Panc1 (cell line): ENCODE measurements at regions of chr11 and their contacts with region 1.

Region 1: DNA sequence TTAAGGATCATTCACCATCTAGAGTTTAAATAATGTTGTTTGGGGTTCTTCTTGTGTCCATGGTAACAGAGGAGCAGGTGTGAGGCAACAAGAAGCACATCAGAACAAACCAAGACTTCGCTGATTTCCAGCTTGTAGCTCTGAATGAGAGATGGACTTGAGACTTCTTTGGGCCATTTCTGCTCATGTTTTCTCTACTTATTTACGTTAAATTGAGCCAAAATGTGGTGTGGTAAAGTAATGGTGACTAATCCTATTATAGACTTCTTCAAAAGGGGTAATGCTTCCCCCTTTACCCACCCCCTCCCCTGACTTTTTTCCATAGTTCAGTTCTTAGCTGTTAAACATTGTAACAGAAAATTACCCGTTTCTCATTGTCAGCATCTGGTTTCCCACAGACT is 65.2 kb downstream of the CSTPP1 start:
- DNase-seq: no peak
- ATAC-seq: no peak
- H3K4me3 ChIP-seq: no peak overlapping the region
- H3K27ac ChIP-seq: no peak overlapping the region
- H3K4me1 ChIP-seq: no peaks in the 10 kb centered on the region
- H3K27me3 ChIP-seq: no peaks in the 10 kb centered on the region
- CTCF ChIP-seq: no peak

Region 2: GRCh38 chr11:47051217-47051616 is 49.4 kb after region 1 on chr11:
- CTCF ChIA-PET with region 1: no interaction called
- POLR2A ChIA-PET with region 1: interaction called, 11 read pairs
- in situ Hi-C with region 1: no loop called
- intact Hi-C with region 1: no loop called
- DNase-seq: no peak
- ATAC-seq: no peak
- H3K4me3 ChIP-seq: no peak overlapping the region
- H3K27ac ChIP-seq: no peak overlapping the region
- H3K4me1 ChIP-seq: no peaks in the 10 kb centered on the region
- H3K27me3 ChIP-seq: no peaks in the 10 kb centered on the region
- CTCF ChIP-seq: no peak